ENCODE measurements at regions of chr12 and their contacts with region 1.

Region 1: DNA sequence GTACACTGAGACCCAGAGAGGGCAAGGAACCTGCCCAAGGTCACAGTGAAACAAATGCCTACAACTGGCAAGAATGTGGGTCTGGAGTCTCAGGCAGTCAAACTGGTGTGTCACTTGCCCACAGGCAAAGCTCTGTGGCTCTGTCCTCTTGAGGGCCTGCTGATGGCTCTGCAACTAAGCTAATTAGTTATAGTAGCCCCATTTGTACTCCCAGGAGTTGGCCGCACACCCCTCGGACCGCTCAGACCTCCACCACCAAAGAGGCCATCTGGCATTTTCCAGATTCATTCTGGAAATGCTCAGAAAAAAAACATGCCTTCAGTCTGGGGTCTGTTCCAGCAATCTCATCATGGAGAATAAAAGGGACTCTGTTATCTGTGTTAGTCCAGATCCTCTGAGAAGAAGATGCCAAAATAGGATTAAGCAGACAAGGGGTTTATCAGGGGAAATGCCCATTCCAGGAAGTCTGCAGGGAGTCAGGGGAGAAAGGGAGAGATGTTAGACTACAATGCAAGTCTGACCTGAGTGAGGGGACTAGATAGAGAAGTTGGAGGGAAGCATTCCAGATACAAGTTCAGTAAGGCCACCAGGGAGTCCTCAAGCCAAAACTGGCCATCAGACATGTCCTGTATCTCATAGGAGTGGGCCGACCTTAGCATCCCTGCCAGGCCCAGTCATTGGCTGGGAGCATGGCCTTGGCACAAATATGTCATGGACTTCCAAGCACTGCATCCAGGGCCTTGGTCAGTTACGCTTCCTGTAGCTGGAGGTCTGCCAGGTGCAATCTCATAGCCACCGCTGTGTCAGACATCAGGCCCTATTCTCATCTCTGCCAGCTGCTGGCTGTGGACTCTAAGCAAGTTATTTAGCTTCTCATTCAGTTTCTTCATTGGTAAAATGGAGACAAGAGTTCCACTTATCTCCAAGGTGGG is 15.4 kb upstream of the OAS1 start:
- DNase-seq: no peak
- H3K4me3 ChIP-seq: no peak overlapping the region
- H3K27ac ChIP-seq: no peak overlapping the region
- H3K4me1 ChIP-seq: no peaks in the 10 kb centered on the region
- H3K27me3 ChIP-seq: no peaks in the 10 kb centered on the region
- CTCF ChIP-seq: no peak
- EP300 ChIP-seq: no peak
- POLR2A ChIP-seq: no peak

Region 2: DNA sequence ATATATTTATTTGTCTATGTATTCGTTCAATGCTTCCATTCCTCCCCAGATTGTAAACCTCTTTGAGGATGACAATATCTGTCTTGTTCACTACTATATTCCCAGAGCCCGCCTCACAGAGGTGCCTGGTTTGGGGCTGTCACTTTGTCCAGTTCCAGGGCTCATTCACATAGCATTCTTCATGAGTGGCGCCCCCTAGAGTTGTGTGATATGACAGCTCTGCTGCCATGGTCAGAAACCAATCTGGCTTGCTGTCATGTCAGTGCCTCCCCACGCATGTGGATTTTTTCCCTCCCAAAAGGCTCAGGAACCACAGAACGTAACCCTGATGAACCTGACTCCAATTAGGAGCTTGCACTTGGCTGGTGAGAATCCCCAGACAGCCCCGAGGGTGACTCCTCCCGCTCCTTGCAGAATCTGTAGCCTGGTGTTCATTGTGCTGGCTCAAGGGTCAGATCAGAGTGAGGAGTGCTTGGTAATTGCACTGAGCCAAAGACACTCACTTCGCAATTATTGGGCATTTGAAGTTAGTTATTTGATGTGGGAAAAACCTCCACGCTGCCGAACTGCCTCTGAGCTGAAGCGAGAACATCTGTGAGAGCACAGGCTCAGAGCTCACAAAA is 327.1 kb before region 1 on chr12:
- intact Hi-C with region 1: no loop called
- DNase-seq: no peak
- H3K4me3 ChIP-seq: no peak overlapping the region
- H3K27ac ChIP-seq: no peak overlapping the region
- H3K4me1 ChIP-seq: no peaks in the 10 kb centered on the region
- H3K27me3 ChIP-seq: no peaks in the 10 kb centered on the region
- CTCF ChIP-seq: no peak
- EP300 ChIP-seq: no peak
- POLR2A ChIP-seq: no peak

Region 3: GRCh38 chr12:112809684-112810083 is 81.7 kb before region 1 on chr12:
- intact Hi-C with region 1: no loop called
- DNase-seq: no peak
- H3K4me3 ChIP-seq: no peak overlapping the region
- H3K27ac ChIP-seq: no peak overlapping the region
- H3K4me1 ChIP-seq: no peaks in the 10 kb centered on the region
- H3K27me3 ChIP-seq: no peaks in the 10 kb centered on the region
- CTCF ChIP-seq: no peak
- EP300 ChIP-seq: no peak
- POLR2A ChIP-seq: no peak

Region 4: DNA sequence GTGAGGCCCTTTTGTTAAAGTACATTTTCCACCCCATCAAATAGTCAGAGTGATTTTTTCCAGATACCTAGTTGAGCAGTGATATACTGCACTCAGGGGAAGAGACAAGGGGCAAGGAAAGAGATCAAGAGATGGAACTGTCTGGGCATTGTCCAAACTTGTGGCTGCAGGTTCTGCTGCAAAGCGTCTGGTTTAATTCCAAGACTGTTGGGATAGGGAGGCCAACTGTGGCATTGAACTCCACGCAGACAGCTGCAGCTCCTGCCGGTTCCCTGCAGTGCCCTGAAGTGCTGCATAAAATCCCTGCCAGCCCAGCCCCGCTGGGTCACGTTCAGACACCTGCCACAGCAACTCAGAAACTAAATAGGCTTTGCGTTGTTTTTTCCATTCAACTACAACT is 69.3 kb before region 1 on chr12:
- intact Hi-C with region 1: no loop called
- DNase-seq: no peak
- H3K4me3 ChIP-seq: no peak overlapping the region
- H3K27ac ChIP-seq: no peak overlapping the region
- H3K4me1 ChIP-seq: no peaks in the 10 kb centered on the region
- H3K27me3 ChIP-seq: no peaks in the 10 kb centered on the region
- CTCF ChIP-seq: no peak
- EP300 ChIP-seq: no peak
- POLR2A ChIP-seq: no peak

Region 5: GRCh38 chr12:113022563-113023297 is 131.4 kb after region 1 on chr12:
- intact Hi-C with region 1: loop called in 1 of 4 experiments (anchors 10 kb)
- DNase-seq: no peak
- H3K4me3 ChIP-seq: no peak overlapping the region
- H3K27ac ChIP-seq: no peak overlapping the region
- H3K4me1 ChIP-seq: no peaks in the 10 kb centered on the region
- H3K27me3 ChIP-seq: no peaks in the 10 kb centered on the region
- CTCF ChIP-seq: no peak
- EP300 ChIP-seq: no peak
- POLR2A ChIP-seq: no peak